Adrenal gland (tissue), 19 donors: ENCODE measurements at regions of chr6 and their contacts with region 1.

Region 1: GRCh38 chr6:144931172-144932035 is 646.3 kb downstream of the UTRN start:
- DNase-seq: peak in 6 of 7 donors; percentile 23 to 79 (median 40)
- H3K4me3 ChIP-seq: no peak overlapping the region
- H3K27ac ChIP-seq: no peak overlapping the region
- H3K4me1 ChIP-seq: no peaks in the 10 kb centered on the region
- H3K27me3 ChIP-seq: no peaks in the 10 kb centered on the region
- CTCF ChIP-seq: peak; percentile 30 to 72 (median 53)
- POLR2A ChIP-seq: no peak

Region 2: DNA sequence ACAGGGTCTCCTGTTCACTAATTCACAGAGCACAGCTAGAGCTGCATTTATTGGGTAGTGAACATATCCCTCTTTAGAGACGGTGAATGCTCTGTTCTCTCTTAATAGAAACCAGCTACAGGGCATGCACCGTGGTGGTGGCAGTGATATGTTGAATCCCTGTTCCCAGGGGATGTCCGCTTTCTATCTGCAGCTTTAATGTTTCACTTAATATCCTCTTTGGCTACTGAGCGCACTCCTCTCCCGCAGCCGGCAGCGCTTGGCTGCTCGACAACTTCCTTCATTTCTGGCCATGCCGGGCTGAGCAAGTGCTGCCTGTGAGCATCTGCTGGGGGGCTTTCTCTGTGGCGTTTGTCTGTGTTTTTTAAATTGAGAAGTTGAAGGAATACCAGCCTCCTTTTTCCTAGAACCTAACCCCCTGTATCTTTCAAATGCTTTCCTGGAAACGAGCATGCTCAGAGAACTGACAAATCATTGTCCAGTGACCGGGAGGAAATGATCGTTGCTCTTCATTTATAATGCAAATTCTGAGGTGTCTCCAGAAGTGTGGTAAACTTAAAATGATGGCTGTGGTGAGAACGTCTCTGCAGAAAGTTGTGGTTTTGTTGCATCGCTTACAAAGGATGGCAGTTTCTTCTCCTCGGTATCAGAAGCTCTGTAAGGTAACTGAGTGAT is 348.3 kb before region 1 on chr6:
- intact Hi-C with region 1: loop called (anchors 5 kb)
- DNase-seq: peak in 5 of 7 donors; percentile 23 to 69 (median 36)
- H3K4me3 ChIP-seq: no peak overlapping the region
- H3K27ac ChIP-seq: peak overlapping the region in 1 of 5 donors; percentile 3
- H3K4me1 ChIP-seq: peaks cover 4 to 51% of the 10 kb centered on the region in 2 donors
- H3K27me3 ChIP-seq: no peaks in the 10 kb centered on the region
- CTCF ChIP-seq: no peak
- POLR2A ChIP-seq: no peak